Naive thymus-derived CD8-positive, alpha-beta T cell (primary cell): ENCODE measurements at regions of chr9 and their contacts with region 1.

Region 1: GRCh38 chr9:89455356-89455824 is 42.5 kb downstream of the SEMA4D start:
- DNase-seq: peak in 4 of 10 donors; percentile 55 to 66 (median 63)
- ATAC-seq: peak; percentile 48 to 66
- H3K4me3 Mint-ChIP-seq: peak overlapping the region; percentile 72 to 93 (median 82)
- H3K27ac Mint-ChIP-seq: peak overlapping the region; percentile 95 to 99 (median 97)
- H3K4me1 Mint-ChIP-seq: peaks cover 56 to 99% (median 97%) of the 10 kb centered on the region in 4 donors
- H3K27me3 Mint-ChIP-seq: no peaks in the 10 kb centered on the region

Region 2: GRCh38 chr9:89410641-89411350 is 44.6 kb before region 1 on chr9:
- POLR2A ChIA-PET with region 1: interaction called, 14 read pairs
- DNase-seq: no peak
- ATAC-seq: no peak
- H3K4me3 Mint-ChIP-seq: peak overlapping the region in 8 of 10 donors; percentile 6 to 69 (median 38)
- H3K27ac Mint-ChIP-seq: peak overlapping the region in 9 of 10 donors; percentile 24 to 92 (median 79)
- H3K4me1 Mint-ChIP-seq: peaks cover 55 to 97% (median 85%) of the 10 kb centered on the region in 4 donors
- H3K27me3 Mint-ChIP-seq: no peaks in the 10 kb centered on the region

Region 3: DNA sequence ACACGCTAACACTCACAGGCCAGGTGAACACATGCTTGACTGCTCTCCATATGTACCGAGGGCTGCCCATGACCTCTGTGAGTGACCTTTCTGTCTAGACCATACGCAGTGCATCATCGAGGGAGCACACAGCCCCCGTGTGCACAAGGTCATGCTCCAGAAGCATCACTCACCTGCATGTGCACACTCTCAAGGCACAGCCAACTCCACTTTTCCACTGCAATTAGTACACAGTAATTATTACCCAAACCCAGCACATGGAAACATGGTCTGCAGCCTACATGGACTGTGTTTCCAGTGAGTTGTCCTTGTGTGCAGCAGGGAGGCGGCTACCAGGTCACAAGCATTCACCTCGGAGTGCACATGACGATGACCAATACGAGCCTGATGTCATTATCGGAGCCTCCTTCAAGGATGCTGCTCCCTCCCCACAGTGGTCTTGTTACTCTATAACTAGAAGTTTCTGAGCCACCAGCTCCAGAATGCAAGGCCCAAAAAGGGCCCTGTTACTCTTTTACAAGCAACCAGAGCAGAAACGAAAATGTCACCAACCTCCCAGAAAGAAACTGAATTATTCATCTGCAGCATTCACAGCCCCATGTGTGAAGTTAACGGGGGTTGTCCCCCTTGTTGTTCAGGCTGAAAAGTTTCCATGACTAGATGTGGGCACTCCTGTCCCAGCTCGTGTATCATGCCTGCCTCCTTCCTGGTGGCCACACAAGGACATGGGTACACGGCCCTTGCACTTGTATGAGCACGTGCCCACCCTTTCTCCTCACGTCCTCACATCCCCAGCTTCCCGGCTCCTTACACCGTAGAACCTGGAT is 11.3 kb after region 1 on chr9:
- POLR2A ChIA-PET with region 1: interaction called, 97 read pairs
- DNase-seq: peak in 5 of 10 donors; percentile 31 to 65 (median 49)
- ATAC-seq: peak in 1 of 2 donors; percentile 33
- H3K4me3 Mint-ChIP-seq: peak overlapping the region; percentile 75 to 90 (median 84)
- H3K27ac Mint-ChIP-seq: peak overlapping the region; percentile 94 to 99 (median 97)
- H3K4me1 Mint-ChIP-seq: peaks cover 71 to 99% (median 98%) of the 10 kb centered on the region in 4 donors
- H3K27me3 Mint-ChIP-seq: no peaks in the 10 kb centered on the region

Region 4: GRCh38 chr9:89489548-89490530 is 34.4 kb after region 1 on chr9:
- POLR2A ChIA-PET with region 1: interaction called, 11 read pairs
- DNase-seq: peak in 4 of 10 donors; percentile 60 to 82 (median 78)
- ATAC-seq: peak; percentile 65 to 90
- H3K4me3 Mint-ChIP-seq: peak overlapping the region; percentile 49 to 99 (median 86)
- H3K27ac Mint-ChIP-seq: peak overlapping the region; percentile 26 to 97 (median 94)
- H3K4me1 Mint-ChIP-seq: peaks cover 60 to 97% (median 95%) of the 10 kb centered on the region in 4 donors
- H3K27me3 Mint-ChIP-seq: no peaks in the 10 kb centered on the region

Region 5: GRCh38 chr9:89505911-89506310 is 50.5 kb after region 1 on chr9:
- POLR2A ChIA-PET with region 1: no interaction called
- DNase-seq: no peak
- ATAC-seq: no peak
- H3K4me3 Mint-ChIP-seq: peak overlapping the region in 3 of 10 donors; percentile 7 to 67 (median 16)
- H3K27ac Mint-ChIP-seq: peak overlapping the region in 8 of 10 donors; percentile 45 to 93 (median 78)
- H3K4me1 Mint-ChIP-seq: peaks cover 57 to 94% (median 92%) of the 10 kb centered on the region in 4 donors
- H3K27me3 Mint-ChIP-seq: no peaks in the 10 kb centered on the region

Region 6: GRCh38 chr9:89549031-89549644 is 93.7 kb after region 1 on chr9:
- POLR2A ChIA-PET with region 1: interaction called, 21 read pairs
- DNase-seq: peak; percentile 72 to 90 (median 84)
- ATAC-seq: peak; percentile 99 to 100
- H3K4me3 Mint-ChIP-seq: peak overlapping the region in 3 of 10 donors; percentile 5 to 45 (median 38)
- H3K27ac Mint-ChIP-seq: peak overlapping the region in 8 of 10 donors; percentile 12 to 84 (median 74)
- H3K4me1 Mint-ChIP-seq: peaks cover 9 to 32% (median 28%) of the 10 kb centered on the region in 4 donors
- H3K27me3 Mint-ChIP-seq: no peaks in the 10 kb centered on the region